WTC11 (cell line): ENCODE measurements at regions of chr1 and their contacts with region 1.

Region 1: DNA sequence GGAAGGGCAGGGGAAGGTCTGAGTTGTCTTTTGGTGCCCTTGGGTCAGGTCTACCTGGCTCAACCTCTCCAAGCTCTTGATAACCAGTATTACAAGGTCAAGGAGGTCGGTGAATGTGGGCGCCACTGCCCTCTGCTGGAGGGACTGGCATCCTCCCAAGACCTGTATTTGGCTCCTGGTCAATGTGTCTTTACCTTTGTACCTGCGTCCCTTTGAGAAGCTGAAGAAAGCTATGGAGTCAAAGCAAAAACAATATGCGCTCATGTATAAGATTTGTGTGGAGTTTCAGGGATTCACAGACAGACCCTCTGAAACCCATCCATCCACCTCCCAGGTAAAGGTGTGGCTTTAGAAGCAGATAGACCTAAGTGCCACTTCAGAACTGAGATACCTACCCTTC is 61.8 kb upstream of the NBL1 start:
- DNase-seq: peak; percentile 91
- ATAC-seq: peak; percentile 99
- H3K4me3 Mint-ChIP-seq: no peak overlapping the region
- H3K27ac Mint-ChIP-seq: no peak overlapping the region
- H3K4me1 Mint-ChIP-seq: no peaks in the 10 kb centered on the region
- H3K27me3 Mint-ChIP-seq: no peaks in the 10 kb centered on the region; the same call in 1 of the 2 replicates
- CTCF ChIP-seq: peak; percentile 78

Region 2: DNA sequence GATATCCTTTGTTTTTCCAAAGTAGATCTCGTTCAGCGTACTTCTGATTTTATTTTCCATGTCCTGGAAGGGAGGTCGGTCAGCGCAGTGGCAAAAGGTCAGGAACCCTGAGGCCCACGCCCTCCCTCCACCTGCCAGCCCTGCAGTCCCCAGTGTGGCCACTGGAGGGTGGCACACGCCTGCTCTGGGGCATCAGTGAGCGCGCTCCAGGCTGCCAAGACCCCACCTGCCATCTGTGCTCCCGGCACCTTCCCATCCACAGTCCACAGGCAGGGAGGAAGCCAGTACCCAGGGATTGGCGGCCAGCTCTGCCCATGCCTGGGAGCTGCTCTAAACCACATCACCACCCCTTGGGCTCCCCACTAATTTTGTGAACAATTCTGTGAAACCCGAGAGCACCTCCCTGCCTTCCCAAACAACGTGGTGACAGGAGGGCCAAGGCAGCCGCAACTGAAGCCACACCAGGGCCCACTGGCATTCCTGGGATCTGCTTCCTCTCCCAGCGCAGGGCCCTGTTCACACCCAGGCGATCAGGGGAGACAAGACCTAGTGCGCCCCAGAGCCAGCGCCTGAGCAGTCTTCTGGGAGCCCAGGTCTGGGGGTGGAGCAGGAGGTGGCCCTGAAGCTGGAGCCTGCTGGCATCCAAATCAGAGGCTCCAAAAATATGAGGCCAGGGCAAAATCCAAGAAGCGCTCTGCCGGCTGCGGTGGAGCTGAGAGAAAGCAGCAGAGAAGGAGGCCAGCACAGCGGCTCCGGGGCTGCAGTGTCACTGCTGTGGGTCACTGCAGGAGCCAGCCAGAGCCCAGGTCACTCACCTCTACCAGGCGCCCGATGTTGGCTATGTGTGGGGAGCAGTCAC is 237.7 kb before region 1 on chr1:
- CTCF ChIA-PET with region 1: interaction called, 18 read pairs
- POLR2A ChIA-PET with region 1: no interaction called
- DNase-seq: peak; percentile 81
- ATAC-seq: peak; percentile 74
- H3K4me3 Mint-ChIP-seq: no peak overlapping the region
- H3K27ac Mint-ChIP-seq: peak overlapping the region; percentile 65
- H3K4me1 Mint-ChIP-seq: peaks cover 14% of the 10 kb centered on the region
- H3K27me3 Mint-ChIP-seq: no peaks in the 10 kb centered on the region
- CTCF ChIP-seq: peak; percentile 94

Region 3: DNA sequence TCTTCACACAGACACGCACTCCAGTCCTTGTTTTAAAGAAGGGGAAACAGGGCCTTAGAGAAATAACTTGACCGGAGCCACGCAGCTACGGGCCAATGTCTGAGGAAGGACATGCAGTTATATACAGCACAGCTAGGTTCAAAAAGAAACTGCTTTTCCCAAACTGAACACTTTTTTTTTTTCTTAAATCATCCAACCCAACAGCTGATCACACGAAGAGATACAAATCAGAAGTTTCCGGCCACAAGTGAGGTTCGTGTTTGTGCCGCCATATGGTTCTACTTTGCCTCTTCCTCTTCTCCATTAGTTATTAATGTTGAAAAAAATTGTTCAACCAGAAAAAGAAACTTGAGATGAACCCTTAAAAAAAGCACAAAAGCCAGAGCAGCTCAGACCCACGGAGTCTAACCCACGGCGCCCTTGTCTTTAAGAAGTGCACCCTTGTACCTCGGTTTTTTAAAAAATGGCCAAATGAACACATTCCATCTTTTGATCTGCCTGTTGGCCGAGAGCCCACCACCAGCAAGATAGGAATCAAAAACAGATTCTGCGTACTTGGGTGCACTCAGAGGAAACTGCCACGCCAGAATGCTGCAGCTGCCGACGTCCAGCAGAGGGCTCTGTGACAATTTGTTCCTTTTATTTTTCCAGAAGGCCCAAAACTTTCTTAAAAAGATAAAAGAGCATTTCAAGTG is 191.3 kb before region 1 on chr1:
- CTCF ChIA-PET with region 1: interaction called, 31 read pairs
- POLR2A ChIA-PET with region 1: no interaction called
- DNase-seq: peak; percentile 51
- ATAC-seq: no peak
- H3K4me3 Mint-ChIP-seq: no peak overlapping the region
- H3K27ac Mint-ChIP-seq: peak overlapping the region; percentile 74
- H3K4me1 Mint-ChIP-seq: peaks cover 27% of the 10 kb centered on the region
- H3K27me3 Mint-ChIP-seq: no peaks in the 10 kb centered on the region
- CTCF ChIP-seq: peak; percentile 46

Region 4: DNA sequence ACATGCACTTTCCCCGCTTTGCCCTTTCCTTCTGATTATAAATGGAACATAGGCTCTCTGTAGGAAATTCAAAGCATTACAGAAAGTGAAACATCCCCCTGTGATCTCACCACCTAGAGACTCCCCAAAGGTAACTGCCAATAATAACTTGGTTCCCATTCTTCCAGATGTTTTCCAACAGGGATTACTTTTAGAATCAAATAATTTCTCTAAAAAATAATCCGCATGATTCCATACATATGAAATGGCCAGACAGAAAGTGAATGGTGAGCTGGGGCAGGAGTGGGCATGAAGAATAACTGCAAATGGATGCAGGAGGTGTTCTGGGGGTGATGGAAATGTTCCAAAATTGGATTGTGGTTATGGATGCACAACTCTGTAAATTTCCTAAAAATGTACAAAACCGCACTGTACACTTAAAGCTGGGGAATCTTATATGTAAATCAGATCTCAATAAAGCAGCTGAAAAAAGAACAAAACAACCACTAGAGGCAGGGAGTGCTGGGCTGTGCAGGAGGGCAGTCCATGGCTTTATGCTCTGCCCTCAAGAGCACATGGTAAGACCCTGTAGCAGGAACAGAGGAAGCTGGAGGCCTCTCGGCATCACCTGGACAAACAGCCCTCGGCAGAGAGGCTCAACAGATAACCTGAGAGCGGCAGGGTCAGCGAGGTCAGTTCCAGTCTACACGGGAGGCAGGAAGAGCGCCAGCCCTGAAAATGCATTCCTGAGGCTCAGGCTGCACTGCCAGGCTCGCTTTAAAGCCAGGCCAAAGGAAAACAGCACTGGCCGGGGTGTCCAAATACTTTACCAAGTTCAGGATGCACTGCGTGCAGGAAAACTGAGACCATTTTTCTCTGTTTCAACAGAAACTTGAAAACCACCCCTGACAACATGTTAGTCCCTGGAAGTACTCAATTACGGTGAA is 136.6 kb before region 1 on chr1:
- CTCF ChIA-PET with region 1: interaction called, 60 read pairs
- POLR2A ChIA-PET with region 1: no interaction called
- DNase-seq: peak; percentile 42
- ATAC-seq: peak; percentile 65
- H3K4me3 Mint-ChIP-seq: no peak overlapping the region
- H3K27ac Mint-ChIP-seq: peak overlapping the region; percentile 47
- H3K4me1 Mint-ChIP-seq: peaks cover 75% of the 10 kb centered on the region
- H3K27me3 Mint-ChIP-seq: no peaks in the 10 kb centered on the region
- CTCF ChIP-seq: no peak

Region 5: GRCh38 chr1:19563324-19564097 is 18.8 kb before region 1 on chr1:
- CTCF ChIA-PET with region 1: interaction called, 19 read pairs
- POLR2A ChIA-PET with region 1: no interaction called
- DNase-seq: no peak
- ATAC-seq: no peak
- H3K4me3 Mint-ChIP-seq: no peak overlapping the region
- H3K27ac Mint-ChIP-seq: no peak overlapping the region; the same call in 1 of the 2 replicates
- H3K4me1 Mint-ChIP-seq: no peaks in the 10 kb centered on the region
- H3K27me3 Mint-ChIP-seq: peaks cover 5% of the 10 kb centered on the region; the same call in 1 of the 2 replicates
- CTCF ChIP-seq: no peak

Region 6: DNA sequence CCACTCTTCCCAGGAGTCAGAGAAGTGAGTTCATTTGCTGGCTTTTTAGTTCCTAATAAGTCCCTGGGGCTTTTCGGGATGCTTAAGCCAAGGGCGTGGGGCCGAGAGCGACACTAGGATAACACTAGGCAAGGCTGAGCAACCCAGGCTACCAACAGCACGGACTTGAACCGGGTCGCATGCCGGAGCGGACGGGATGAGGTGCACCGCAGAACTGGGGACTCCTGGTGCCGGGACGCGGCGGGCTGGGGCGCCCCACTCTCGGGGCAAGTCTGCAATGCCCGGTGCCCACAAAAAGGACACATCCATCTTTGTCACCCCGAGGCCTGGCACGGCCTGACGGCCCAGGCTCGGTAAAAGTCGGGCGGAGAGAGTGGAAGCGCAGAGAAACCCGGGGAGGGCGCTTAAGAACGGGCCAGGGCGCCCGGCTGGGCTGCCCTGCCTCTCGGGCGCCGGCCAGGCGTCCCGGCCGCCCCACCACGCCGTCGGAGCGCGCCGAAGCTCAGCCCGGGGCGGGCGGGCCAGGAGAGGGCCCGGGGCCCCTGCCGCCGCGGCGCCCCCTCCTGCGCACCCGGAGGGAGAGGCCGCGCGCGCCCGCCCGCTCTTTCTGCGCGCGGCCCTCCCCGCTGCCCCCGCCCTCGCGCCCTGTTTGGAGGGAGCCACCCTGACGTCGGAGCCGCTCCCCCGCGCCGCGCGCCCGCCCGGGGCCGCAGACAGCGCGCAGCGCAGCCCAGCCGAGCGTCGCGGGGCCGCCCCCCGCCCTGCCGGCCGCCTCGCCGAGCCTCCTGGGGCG is 61.5 kb after region 1 on chr1 and contains the start of gene NBL1:
- CTCF ChIA-PET with region 1: interaction called, 21 read pairs
- POLR2A ChIA-PET with region 1: no interaction called
- DNase-seq: no peak
- ATAC-seq: peak; percentile 12
- H3K4me3 Mint-ChIP-seq: peak within 1 kb of the TSS; percentile 94
- H3K27ac Mint-ChIP-seq: no peak within 1 kb of the TSS
- H3K4me1 Mint-ChIP-seq: peaks cover 25% of the 10 kb centered on the region
- H3K27me3 Mint-ChIP-seq: peaks cover 56% of the 10 kb centered on the region
- CTCF ChIP-seq: no peak
- total RNA-seq, gene NBL1: 8.8 to 17.1 TPM (median 10.2 TPM) in 3 replicates